Right lobe of liver (tissue), 6 donors: ENCODE measurements at regions of chr21 and their contacts with region 1.

Region 1: DNA sequence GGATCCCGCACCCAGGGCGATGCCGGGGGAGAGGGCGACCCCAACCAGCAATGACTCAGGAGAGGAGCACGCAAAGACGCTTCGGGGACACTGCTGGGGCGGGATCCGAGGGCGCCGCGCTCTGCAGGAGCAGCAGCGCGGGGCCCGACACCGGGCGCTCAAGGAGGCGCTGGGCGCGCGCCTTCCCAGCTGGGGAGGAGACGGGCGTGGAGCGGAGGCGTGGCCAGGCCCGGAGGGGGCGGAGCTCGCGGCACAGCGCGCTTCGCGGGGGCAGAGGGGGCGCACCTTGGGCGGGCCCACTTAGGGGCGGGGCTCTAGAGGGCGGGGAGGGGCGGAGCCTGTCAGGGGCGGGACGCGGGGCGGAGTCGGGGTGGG is 369 bp downstream of the SUMO3 start:
- DNase-seq: peak; percentile 95 to 96 (median 96)
- ATAC-seq: peak; percentile 90 to 98 (median 96)
- H3K4me3 ChIP-seq: peak overlapping the region; percentile 63 to 67 (median 65)
- H3K27ac ChIP-seq: peak overlapping the region in 1 of 3 donors; percentile 71
- H3K4me1 ChIP-seq: peaks cover 0 to 8% (median 2%) of the 10 kb centered on the region in 4 donors
- H3K27me3 ChIP-seq: no peaks in the 10 kb centered on the region
- CTCF ChIP-seq: no peak
- POLR2A ChIP-seq: no peak

Region 2: GRCh38 chr21:44939532-44940115 is 122.1 kb after region 1 on chr21 and contains the start of gene SLX9:
- intact Hi-C with region 1: loop called in 1 of 2 experiments (anchors 10 kb)
- DNase-seq: peak; percentile 80 to 82 (median 81)
- ATAC-seq: peak; percentile 89 to 94 (median 92)
- H3K4me3 ChIP-seq: peak within 1 kb of the TSS; percentile 84 to 89 (median 87)
- H3K27ac ChIP-seq: peak within 1 kb of the TSS; percentile 13 to 48 (median 43)
- H3K4me1 ChIP-seq: peaks cover 0 to 22% (median 10%) of the 10 kb centered on the region in 4 donors
- H3K27me3 ChIP-seq: no peaks in the 10 kb centered on the region
- CTCF ChIP-seq: no peak
- POLR2A ChIP-seq: peak; percentile 57
- total RNA-seq, gene SLX9: 15.0 to 27.9 (median 17.1) TPM

Region 3: GRCh38 chr21:45041351-45041805 is 223.9 kb after region 1 on chr21:
- intact Hi-C with region 1: no loop called
- DNase-seq: peak in 2 of 3 donors; percentile 37 to 49
- ATAC-seq: peak; percentile 33 to 80 (median 68)
- H3K4me3 ChIP-seq: no peak overlapping the region
- H3K27ac ChIP-seq: no peak overlapping the region
- H3K4me1 ChIP-seq: no peaks in the 10 kb centered on the region
- H3K27me3 ChIP-seq: no peaks in the 10 kb centered on the region
- CTCF ChIP-seq: no peak
- POLR2A ChIP-seq: peak; percentile 28